SK-N-SH (cell line): ENCODE measurements at regions of chr6 and their contacts with region 1.

Region 1: DNA sequence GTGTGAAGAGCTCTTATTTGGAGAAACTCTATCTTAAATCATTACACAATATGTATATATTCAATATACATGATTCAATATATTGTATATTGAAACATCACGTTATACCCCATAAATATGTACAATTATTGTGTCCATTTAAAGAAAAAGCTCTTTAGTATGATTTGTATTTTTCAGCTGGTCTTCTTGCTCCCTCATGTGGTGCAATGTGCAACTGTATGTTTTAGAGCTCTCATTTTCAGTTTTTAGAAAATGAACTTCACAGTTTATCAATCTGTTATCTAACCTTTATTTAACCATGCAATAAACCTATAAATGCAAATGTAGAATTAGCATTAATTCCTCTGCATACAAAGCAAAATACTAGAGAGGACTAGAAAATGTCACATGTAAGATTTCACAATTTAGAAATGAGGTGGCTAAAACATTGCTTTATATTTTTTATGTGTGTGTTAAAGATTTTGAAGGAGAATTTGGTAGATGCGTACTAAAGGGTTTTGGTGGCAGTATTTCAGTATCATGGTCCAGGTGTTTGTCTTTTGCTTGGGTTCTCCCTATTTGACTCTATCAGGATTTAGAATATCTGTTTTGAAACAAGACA is 167.1 kb downstream of the PHF3 start:
- DNase-seq: peak; percentile 12
- H3K4me3 ChIP-seq: no peak overlapping the region; a peak in 1 of 4 replicates
- H3K27ac ChIP-seq: peak overlapping the region in 1 of 2 experiments; percentile 92; a peak in 2 of 4 replicates
- H3K4me1 ChIP-seq: peaks cover 38 to 40% of the 10 kb centered on the region in 2 experiments
- H3K27me3 ChIP-seq: no peaks in the 10 kb centered on the region
- CTCF ChIP-seq: peak; percentile 81
- EP300 ChIP-seq: no peak
- RAD21 ChIP-seq: peak; percentile 86

Region 2: GRCh38 chr6:63352587-63353285 is 450.0 kb before region 1 on chr6:
- CTCF ChIA-PET with region 1: interaction called, 68 read pairs
- POLR2A ChIA-PET with region 1: no interaction called
- DNase-seq: peak; percentile 5
- H3K4me3 ChIP-seq: no peak overlapping the region
- H3K27ac ChIP-seq: no peak overlapping the region
- H3K4me1 ChIP-seq: peaks cover 0 to 12% of the 10 kb centered on the region in 2 experiments; a peak in 1 of 4 replicates
- H3K27me3 ChIP-seq: no peaks in the 10 kb centered on the region
- CTCF ChIP-seq: peak; percentile 70
- EP300 ChIP-seq: no peak
- RAD21 ChIP-seq: peak; percentile 81

Region 3: DNA sequence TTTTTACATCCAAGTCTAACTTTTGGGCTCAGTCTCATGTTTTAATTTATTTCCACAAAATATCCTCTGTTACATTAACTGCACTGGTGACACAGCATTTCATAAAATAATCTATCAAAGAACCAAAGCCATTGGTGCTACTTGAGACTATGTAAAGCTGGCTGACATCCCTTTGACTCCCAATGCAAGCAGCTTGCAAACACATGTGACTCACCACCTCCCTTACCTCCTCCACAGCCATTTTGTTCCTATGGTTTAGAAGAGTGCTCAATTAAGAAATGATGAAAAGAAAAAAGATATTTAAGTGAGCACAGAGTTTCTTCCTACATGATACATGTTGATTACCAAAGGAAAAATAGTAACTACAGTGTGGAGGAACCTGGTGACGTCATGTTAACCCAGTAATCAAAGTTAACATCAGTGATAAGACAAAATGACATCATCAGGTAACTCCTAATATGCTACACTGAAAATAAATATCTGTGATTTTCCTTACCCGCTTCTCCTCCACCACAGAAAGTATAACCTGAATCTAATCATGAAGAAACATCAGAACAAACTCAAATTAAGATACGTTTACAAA is 429.7 kb before region 1 on chr6:
- CTCF ChIA-PET with region 1: no interaction called
- POLR2A ChIA-PET with region 1: no interaction called
- DNase-seq: no peak
- H3K4me3 ChIP-seq: no peak overlapping the region
- H3K27ac ChIP-seq: no peak overlapping the region
- H3K4me1 ChIP-seq: no peaks in the 10 kb centered on the region; a peak in 2 of 4 replicates
- H3K27me3 ChIP-seq: no peaks in the 10 kb centered on the region
- CTCF ChIP-seq: no peak
- EP300 ChIP-seq: no peak
- RAD21 ChIP-seq: no peak

Region 4: DNA sequence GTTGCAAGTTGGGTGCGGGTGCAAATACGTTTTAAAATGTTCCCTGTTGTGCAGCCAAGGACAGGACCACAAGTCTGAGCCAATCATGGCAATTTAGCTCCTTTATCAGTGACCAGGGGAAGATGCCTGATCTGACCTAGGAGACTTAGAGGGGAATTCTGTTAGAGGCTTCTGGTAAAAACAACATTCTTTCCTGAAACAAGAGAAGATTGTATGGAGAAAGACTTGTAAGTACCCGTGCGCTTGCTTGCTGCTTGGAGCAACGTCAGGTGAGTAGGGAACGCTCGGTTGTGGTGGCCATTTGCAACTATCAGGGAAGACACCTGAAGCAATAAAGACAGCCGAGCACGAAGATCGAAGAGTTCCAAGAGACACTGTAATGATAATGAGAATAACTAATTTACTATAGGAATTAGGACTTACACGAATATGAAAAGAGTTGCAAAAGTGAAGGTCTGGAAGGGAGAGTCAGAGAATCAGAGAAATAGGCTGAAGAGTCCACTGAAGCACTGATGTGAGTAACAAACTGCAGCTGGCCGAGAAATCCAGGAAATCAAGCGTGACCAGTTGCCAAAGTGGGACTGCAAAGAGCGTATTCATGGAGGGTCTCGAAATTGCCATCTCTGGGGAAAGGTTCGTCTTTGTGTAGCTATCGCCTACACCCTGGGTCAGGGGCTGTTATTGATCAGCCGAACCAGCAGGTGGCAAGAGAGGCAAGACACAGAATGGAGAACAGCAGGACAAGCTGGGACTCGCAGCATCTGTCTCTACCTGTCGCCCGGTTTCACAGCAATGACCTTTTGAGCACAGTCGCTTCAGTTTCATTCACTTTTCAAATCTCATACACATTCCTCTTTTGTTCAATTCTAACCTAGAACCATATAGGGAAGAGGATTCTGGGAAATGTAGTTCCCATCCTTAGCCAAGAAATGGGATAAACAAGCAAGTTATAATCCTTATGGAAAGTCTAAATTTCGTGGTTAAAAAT is 204.4 kb before region 1 on chr6:
- CTCF ChIA-PET with region 1: interaction called, 26 read pairs
- POLR2A ChIA-PET with region 1: no interaction called
- DNase-seq: peak; percentile 78
- H3K4me3 ChIP-seq: peak overlapping the region; percentile 67 to 77
- H3K27ac ChIP-seq: peak overlapping the region in 1 of 2 experiments; percentile 76; a peak in 2 of 4 replicates
- H3K4me1 ChIP-seq: no peaks in the 10 kb centered on the region; a peak in 1 of 4 replicates
- H3K27me3 ChIP-seq: no peaks in the 10 kb centered on the region
- CTCF ChIP-seq: peak; percentile 96
- EP300 ChIP-seq: no peak
- RAD21 ChIP-seq: peak; percentile 72

Region 5: GRCh38 chr6:63790334-63790733 is 12.4 kb before region 1 on chr6:
- CTCF ChIA-PET with region 1: interaction called, 17 read pairs
- POLR2A ChIA-PET with region 1: no interaction called
- DNase-seq: no peak
- H3K4me3 ChIP-seq: no peak overlapping the region
- H3K27ac ChIP-seq: no peak overlapping the region
- H3K4me1 ChIP-seq: no peaks in the 10 kb centered on the region
- H3K27me3 ChIP-seq: no peaks in the 10 kb centered on the region
- CTCF ChIP-seq: no peak
- EP300 ChIP-seq: no peak
- RAD21 ChIP-seq: no peak